Activated CD8-positive, alpha-beta T cell treated with anti-CD3 and anti-CD28 coated beads for 36 hours (primary cell): ENCODE measurements at regions of chr9 and their contacts with region 1.

Region 1: GRCh38 chr9:132260846-132261245 is 93.9 kb downstream of the SETX start:
- DNase-seq: no peak
- ATAC-seq: no peak
- H3K4me3 Mint-ChIP-seq: no peak overlapping the region
- H3K27ac Mint-ChIP-seq: no peak overlapping the region
- H3K4me1 Mint-ChIP-seq: peaks cover 11% of the 10 kb centered on the region
- H3K27me3 Mint-ChIP-seq: no peaks in the 10 kb centered on the region
- CTCF ChIP-seq: no peak

Region 2: DNA sequence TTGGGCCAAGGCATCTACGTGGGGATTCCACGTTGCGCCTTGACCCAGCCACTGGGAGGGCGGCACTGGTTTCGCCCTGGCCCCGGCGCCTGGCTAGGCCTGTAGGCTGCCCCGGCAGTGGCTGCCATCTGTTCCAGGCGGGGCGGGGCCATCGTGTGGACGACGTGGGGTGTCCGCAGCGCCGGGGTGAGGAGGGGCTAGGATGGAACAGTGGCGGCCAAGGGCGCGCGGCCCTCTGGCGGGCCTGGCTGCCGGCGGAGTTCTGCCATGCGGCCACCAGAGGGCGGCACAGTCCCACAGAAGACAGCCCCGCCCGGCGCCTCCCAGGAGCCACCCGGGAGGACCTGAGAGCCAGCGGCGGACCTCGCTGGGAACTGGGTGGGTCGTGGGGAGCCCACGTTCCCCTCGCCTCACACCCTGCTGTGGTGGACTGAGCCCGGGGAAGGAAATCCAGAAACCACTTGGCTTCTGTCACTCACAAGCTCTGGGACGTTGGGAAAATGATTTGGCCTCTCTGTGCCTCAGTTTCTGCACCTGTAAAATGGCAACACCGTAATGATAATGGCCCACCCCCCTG is 498.4 kb before region 1 on chr9:
- CTCF ChIA-PET with region 1: interaction called, 16 read pairs
- POLR2A ChIA-PET with region 1: no interaction called
- intact Hi-C with region 1: no loop called
- DNase-seq: peak; percentile 79
- ATAC-seq: peak; percentile 90
- H3K4me3 Mint-ChIP-seq: no peak overlapping the region
- H3K27ac Mint-ChIP-seq: no peak overlapping the region
- H3K4me1 Mint-ChIP-seq: peaks cover 11% of the 10 kb centered on the region
- H3K27me3 Mint-ChIP-seq: peaks cover 10% of the 10 kb centered on the region
- CTCF ChIP-seq: peak; percentile 97

Region 3: DNA sequence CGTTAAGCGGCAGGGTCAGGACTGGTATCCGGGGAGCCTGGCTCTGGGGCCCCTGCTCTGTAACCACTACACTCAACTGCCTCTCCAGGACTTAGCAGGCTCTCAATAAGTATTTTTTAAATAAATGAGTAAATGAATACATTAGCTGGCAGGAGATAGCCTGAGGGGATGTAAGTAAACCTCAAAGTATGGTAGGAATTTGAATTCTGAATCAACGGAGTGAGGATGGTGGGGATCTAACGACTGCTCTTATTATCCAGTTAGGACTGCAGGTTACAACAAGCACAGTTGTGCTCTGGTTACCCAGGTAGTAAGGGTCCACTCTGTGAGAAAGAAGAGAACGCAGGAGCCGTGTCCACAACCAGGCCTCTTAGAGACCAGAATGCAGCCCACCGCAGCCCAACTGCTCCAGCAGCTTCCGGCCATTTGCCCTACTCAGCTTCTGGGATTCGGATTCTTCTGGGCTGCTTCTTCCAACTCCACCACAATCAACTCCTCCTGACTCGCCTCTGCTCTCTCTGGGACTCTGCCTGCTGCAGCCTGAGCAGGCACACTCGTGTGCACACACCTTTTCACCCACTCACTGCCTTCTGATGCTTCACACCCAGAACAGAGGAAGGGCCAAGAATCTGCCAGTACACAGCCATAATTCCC is 233.8 kb before region 1 on chr9:
- CTCF ChIA-PET with region 1: no interaction called
- POLR2A ChIA-PET with region 1: no interaction called
- intact Hi-C with region 1: no loop called
- DNase-seq: no peak
- ATAC-seq: no peak
- H3K4me3 Mint-ChIP-seq: no peak overlapping the region
- H3K27ac Mint-ChIP-seq: no peak overlapping the region
- H3K4me1 Mint-ChIP-seq: peaks cover 17% of the 10 kb centered on the region
- H3K27me3 Mint-ChIP-seq: no peaks in the 10 kb centered on the region
- CTCF ChIP-seq: no peak